Breast epithelium (tissue), 4 donors: ENCODE measurements at regions of chr12 and their contacts with region 1.

Region 1: GRCh38 chr12:115611477-115611876 is 666.0 kb downstream of the MED13L start:
- DNase-seq: no peak
- H3K4me3 ChIP-seq: no peak overlapping the region
- H3K27ac ChIP-seq: no peak overlapping the region
- H3K4me1 ChIP-seq: no peaks in the 10 kb centered on the region
- H3K27me3 ChIP-seq: no peaks in the 10 kb centered on the region
- CTCF ChIP-seq: no peak
- POLR2A ChIP-seq: no peak

Region 2: GRCh38 chr12:117466677-117467362 is 1855.3 kb after region 1 on chr12:
- intact Hi-C with region 1: loop called (anchors 5 kb)
- DNase-seq: no peak
- H3K4me3 ChIP-seq: no peak overlapping the region
- H3K27ac ChIP-seq: no peak overlapping the region
- H3K4me1 ChIP-seq: no peaks in the 10 kb centered on the region
- H3K27me3 ChIP-seq: no peaks in the 10 kb centered on the region
- CTCF ChIP-seq: no peak
- POLR2A ChIP-seq: no peak